ENCODE measurements at regions of chr11 and their contacts with region 1.

Region 1: DNA sequence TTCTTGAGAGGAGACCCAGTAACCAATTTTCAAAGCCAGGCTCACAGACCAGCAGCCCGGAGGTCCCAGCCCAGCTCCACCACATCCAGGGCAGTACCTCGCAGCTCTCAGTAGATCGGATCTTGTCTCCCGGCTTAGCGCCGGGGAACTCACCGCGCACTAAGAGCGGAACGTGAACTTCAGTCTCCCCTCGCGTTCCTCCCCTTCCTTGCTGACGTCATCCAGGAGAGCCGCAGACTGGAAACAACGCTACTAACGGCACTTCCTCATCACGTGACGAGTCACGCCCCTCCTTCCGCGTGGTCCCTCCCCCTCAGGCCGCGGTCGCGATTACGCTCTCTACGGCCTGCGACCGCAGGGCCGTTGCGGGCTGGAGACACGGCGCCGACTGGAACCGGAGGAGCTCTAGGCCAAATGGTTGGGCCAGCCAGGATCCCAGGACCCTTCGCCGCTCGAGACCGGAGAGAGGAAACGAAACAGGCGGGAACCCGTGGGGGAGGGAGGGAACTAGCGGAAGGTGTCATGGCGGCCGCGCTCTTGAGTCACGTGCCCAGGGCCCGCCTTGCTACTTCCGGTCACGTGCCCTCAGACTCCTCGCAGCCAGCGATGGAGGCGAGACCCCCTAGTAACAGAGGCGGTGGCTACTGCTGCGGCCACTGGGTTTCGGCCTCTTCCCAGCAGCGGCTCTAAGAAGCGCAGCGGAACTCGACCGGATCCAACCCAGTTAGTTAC is at the starts of genes GTF2H1 and HPS5:
- DNase-seq: peak; percentile 93
- ATAC-seq: peak; percentile 87
- H3K4me3 Mint-ChIP-seq: peak within 1 kb of the TSS; percentile 99
- H3K27ac Mint-ChIP-seq: peak within 1 kb of the TSS; percentile 100
- H3K4me1 Mint-ChIP-seq: peaks cover 70% of the 10 kb centered on the region
- H3K27me3 Mint-ChIP-seq: no peaks in the 10 kb centered on the region
- CTCF ChIP-seq: no peak
- total RNA-seq, gene GTF2H1: 60.3 and 71.5 TPM in 2 replicates
- total RNA-seq, gene HPS5: 42.6 and 51.0 TPM in 2 replicates

Region 2: DNA sequence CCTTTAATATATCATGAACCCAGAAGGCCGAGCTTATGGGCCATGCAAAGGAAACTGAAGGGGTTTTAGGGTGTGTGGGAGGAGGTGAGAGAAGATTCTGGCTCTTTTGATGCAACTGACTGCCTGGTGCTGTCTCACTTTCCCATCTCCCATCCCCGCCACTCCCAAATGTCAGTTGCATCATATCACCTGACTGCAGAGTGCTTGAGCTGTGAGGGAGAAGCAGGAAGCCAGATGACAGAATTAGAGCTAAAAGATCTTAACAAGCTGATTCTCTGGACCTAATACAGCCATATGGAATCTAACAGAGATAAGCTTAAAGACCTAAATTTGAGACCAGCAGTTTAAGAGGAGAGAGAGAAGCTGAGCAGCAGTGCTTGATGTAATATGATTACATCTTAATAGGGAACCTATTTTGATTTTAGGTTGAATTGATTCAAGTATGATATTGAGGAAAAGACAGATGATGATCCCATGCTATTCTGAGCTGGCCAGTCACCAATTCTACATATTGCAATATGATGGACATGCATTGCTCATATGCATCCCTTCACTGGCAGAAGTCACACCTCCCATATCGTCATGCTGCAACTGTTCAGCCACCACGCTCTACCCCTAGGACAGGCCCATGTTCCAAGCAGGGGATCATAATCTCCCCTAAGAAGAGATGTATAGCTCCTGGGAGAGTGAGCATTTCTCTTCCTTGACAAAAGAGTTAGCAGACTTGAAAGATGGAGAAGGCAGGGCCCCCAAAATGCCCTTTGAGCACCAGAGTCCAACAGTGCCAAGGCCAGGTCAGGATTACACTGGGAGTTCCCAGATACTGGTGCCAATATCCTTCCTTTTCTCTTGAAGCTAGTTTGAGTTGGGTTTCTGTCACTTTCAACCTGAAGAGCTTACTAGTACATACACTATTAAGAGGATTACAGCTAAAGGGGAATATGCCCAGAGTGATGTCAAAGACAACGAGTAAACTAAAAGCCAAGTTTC is 1352.8 kb before region 1 on chr11:
- CTCF ChIA-PET with region 1: no interaction called
- POLR2A ChIA-PET with region 1: no interaction called
- intact Hi-C with region 1: no loop called
- DNase-seq: no peak
- ATAC-seq: no peak
- H3K4me3 Mint-ChIP-seq: no peak overlapping the region
- H3K27ac Mint-ChIP-seq: no peak overlapping the region
- H3K4me1 Mint-ChIP-seq: no peaks in the 10 kb centered on the region
- H3K27me3 Mint-ChIP-seq: no peaks in the 10 kb centered on the region
- CTCF ChIP-seq: no peak

Region 3: DNA sequence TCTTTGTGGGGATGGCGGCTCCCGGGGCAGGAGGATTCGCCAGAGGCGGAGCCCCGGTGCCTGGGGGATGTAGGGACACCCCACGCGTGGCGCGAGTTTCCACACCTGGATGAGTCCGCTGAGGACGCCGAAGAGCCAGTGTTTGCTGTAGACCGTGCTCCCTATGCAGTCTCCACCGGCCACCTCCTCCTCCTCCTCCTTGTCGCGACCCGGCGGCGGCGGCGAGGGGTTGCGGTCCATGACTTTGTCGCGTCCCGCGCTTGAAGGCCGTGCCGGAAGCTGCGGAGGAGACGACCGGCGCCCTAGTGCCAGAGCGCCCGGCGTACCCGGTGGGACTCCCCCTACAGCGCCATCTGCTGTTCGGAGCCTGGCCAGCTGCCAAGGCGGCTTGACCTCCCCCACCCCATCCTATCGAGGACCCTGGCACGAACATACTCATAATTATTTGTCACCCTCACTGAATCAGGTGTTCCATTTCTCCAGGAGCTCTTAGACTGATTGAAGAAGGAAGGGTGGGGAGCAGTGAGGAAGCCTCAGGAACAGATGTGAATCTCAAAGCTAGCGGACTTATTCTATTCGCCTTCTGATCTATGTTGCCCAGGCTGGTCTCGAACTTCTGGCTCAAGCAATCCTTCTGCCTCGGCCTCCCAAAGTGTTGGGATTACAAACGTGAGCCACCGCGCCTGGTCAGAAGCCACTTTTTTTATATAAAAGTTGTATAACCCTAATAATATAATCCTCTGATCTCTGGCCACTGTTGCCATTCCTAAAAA is 216.2 kb before region 1 on chr11 and contains the start of gene SAAL1:
- CTCF ChIA-PET with region 1: no interaction called
- POLR2A ChIA-PET with region 1: interaction called, 5 read pairs
- intact Hi-C with region 1: loop called (anchors 1 kb)
- DNase-seq: peak; percentile 91
- ATAC-seq: peak; percentile 97
- H3K4me3 Mint-ChIP-seq: peak within 1 kb of the TSS; percentile 91
- H3K27ac Mint-ChIP-seq: peak within 1 kb of the TSS; percentile 76
- H3K4me1 Mint-ChIP-seq: peaks cover 28% of the 10 kb centered on the region
- H3K27me3 Mint-ChIP-seq: peaks cover 14% of the 10 kb centered on the region
- CTCF ChIP-seq: no peak
- total RNA-seq, gene SAAL1: 34.4 and 39.7 TPM in 2 replicates

Region 4: GRCh38 chr11:18280438-18281045 is 41.6 kb before region 1 on chr11:
- CTCF ChIA-PET with region 1: no interaction called
- POLR2A ChIA-PET with region 1: interaction called, 25 read pairs
- intact Hi-C with region 1: loop called (anchors 1 kb)
- DNase-seq: no peak
- ATAC-seq: peak; percentile 79
- H3K4me3 Mint-ChIP-seq: peak overlapping the region; percentile 62
- H3K27ac Mint-ChIP-seq: peak overlapping the region; percentile 84
- H3K4me1 Mint-ChIP-seq: peaks cover 41% of the 10 kb centered on the region
- H3K27me3 Mint-ChIP-seq: no peaks in the 10 kb centered on the region
- CTCF ChIP-seq: no peak

Region 5: DNA sequence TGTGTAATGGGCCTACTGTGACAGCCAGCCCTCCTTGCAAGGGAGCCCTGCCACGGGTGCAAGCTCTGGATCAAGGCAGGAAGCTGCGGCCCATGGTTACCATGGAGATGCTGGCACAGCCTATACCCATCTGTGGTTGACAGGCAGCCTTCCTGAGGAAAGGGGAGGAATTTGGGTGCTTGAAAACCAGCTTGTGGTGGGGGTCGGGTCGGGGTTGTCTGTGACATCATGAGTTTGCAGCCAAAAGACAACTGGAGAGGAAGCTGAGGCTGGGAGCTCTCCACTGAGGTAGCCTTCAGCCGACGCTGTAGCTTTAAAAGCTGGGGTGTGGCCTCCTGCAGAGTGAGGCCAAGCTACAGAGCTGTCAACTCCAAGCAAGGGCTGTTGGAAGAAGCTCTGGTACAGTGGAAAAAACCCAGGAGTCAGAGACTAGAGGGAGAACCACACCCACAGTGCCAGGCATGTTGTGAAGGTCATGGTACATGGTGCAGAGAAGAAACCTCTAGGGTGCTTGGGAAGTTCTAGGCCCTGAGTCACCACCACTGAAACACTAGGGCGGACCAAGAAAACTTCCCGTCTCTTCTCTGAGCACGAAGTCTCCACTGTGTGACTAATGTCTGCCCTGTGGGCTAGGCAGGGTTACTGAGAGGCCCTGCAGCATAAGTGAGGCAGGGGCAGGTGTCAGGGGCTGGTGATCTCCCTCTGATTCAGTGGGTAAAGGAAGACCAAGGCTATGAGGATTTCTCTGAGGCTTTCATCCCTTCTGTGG is 61.4 kb after region 1 on chr11:
- CTCF ChIA-PET with region 1: no interaction called
- POLR2A ChIA-PET with region 1: interaction called, 15 read pairs
- intact Hi-C with region 1: loop called (anchors 1 kb)
- DNase-seq: peak; percentile 26
- ATAC-seq: peak; percentile 93
- H3K4me3 Mint-ChIP-seq: peak overlapping the region; percentile 55
- H3K27ac Mint-ChIP-seq: peak overlapping the region; percentile 96
- H3K4me1 Mint-ChIP-seq: peaks cover 19% of the 10 kb centered on the region
- H3K27me3 Mint-ChIP-seq: no peaks in the 10 kb centered on the region
- CTCF ChIP-seq: no peak

Region 6: GRCh38 chr11:18526521-18527296 is 204.6 kb after region 1 on chr11 and contains the start of gene TSG101:
- CTCF ChIA-PET with region 1: no interaction called
- POLR2A ChIA-PET with region 1: interaction called, 12 read pairs
- intact Hi-C with region 1: loop called (anchors 1 kb)
- DNase-seq: peak; percentile 95
- ATAC-seq: peak; percentile 84
- H3K4me3 Mint-ChIP-seq: peak within 1 kb of the TSS; percentile 100
- H3K27ac Mint-ChIP-seq: peak within 1 kb of the TSS; percentile 100
- H3K4me1 Mint-ChIP-seq: peaks cover 44% of the 10 kb centered on the region
- H3K27me3 Mint-ChIP-seq: no peaks in the 10 kb centered on the region
- CTCF ChIP-seq: no peak
- total RNA-seq, gene TSG101: 45.3 and 47.2 TPM in 2 replicates

Measured in activated B cell treated with CpG ODN at 0.5 μM for 24 hours (primary cell).